ENCODE measurements at regions of chr11 and their contacts with region 1.

Region 1: GRCh38 chr11:44621140-44621681 is 55.7 kb downstream of the CD82 start:
- DNase-seq: no peak
- H3K4me3 ChIP-seq: peak overlapping the region; percentile 37
- CTCF ChIP-seq: peak; percentile 98

Region 2: DNA sequence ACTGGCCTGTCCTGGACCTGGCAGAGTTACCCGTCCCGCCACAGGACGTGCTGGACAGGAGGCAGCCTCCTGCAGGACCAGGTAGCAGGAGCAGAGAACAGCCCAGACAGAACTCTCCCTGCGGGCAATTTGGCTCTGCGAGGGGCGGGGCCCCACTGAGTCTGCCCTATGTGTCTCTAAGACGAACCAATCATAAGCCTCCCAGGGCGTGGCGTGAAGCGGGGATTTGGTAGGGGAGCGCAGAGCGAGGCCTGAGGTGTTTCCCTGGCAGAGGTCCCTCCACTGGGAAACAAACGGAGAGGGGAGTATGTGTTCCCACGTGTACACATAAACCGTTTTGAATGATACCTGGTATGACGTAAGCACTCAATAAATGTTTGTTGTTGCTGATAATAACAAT is 48.3 kb before region 1 on chr11:
- CTCF ChIA-PET with region 1: interaction called, 995 read pairs
- POLR2A ChIA-PET with region 1: no interaction called
- DNase-seq: no peak
- H3K4me3 ChIP-seq: no peak overlapping the region
- CTCF ChIP-seq: no peak

Region 3: GRCh38 chr11:44589301-44589700 is 31.9 kb before region 1 on chr11:
- CTCF ChIA-PET with region 1: interaction called, 10 read pairs
- POLR2A ChIA-PET with region 1: no interaction called
- DNase-seq: peak; percentile 85
- H3K4me3 ChIP-seq: no peak overlapping the region
- CTCF ChIP-seq: no peak

Region 4: GRCh38 chr11:44886790-44887140 is 265.6 kb after region 1 on chr11:
- CTCF ChIA-PET with region 1: interaction called, 112 read pairs
- POLR2A ChIA-PET with region 1: no interaction called
- DNase-seq: no peak
- H3K4me3 ChIP-seq: no peak overlapping the region
- CTCF ChIP-seq: no peak

Region 5: GRCh38 chr11:44911029-44911814 is 290.0 kb after region 1 on chr11:
- CTCF ChIA-PET with region 1: interaction called, 659 read pairs
- POLR2A ChIA-PET with region 1: no interaction called
- DNase-seq: peak; percentile 29
- H3K4me3 ChIP-seq: no peak overlapping the region
- CTCF ChIP-seq: peak; percentile 61

Region 6: GRCh38 chr11:44936525-44936924 is 315.3 kb after region 1 on chr11:
- CTCF ChIA-PET with region 1: interaction called, 21 read pairs
- POLR2A ChIA-PET with region 1: no interaction called
- DNase-seq: peak; percentile 12
- H3K4me3 ChIP-seq: no peak overlapping the region
- CTCF ChIP-seq: peak; percentile 96